Activated T-helper 1 cell treated with anti-CD3 and anti-CD28 coated beads, Interleukin-12 subunit alpha, Interleukin-12 subunit beta, Interleukin-2, Interleukin-4 antibody, amounts not matched to agents 30 ng/mL and 10 ng/mL and 1 ng/mL, durations not matched to agents 14 hours and 24 hours and 36 hours (primary cell): ENCODE measurements at regions of chr12 and their contacts with region 1.

Region 1: DNA sequence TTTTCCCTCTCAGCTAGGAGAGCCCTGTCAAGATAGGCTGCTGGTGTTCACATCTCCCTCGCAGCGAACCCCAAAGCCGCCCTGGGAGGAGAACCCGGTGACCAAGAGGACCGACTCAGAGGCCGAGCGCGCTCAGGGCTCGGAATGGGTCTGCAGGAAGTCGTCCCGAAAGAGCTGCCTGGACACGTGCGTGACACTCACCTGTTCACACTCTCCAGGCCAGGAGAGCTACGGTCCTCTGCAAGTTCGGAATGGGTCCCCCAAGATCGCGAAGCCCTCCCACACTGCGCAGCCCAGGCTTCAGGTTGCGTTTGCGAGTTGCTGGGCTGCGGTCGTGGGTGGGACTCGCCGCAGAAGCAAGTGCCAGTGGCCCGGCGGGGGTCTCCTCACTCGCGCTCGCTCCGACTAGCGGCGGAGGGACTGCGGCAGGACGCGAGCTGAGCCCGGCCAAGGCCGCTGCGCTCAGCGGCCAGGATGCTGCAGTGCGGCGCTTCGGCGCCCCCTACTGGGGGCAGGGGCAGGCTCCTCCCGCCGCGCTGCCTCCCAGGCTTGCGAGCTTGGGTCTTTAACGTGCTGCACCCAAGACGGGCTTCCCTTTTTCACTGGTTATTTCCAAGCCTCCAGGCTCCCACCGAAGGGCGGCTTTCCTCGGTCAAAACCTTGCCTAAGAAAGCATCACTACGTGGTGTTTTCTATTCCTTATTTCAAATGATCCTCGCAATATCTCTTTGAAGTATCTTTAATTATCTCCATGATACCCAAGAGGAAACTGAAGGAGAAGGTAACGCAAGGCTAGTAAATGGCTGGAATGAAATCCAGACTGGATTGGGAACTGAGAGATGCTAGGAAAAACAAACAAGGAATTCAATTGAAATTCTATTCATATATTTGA is at the start of gene RERG:
- DNase-seq: peak; percentile 65
- H3K4me3 Mint-ChIP-seq: peak within 1 kb of the TSS; percentile 43
- H3K27ac Mint-ChIP-seq: no peak within 1 kb of the TSS
- H3K4me1 Mint-ChIP-seq: no peaks in the 10 kb centered on the region
- H3K27me3 Mint-ChIP-seq: peaks cover 32% of the 10 kb centered on the region
- total RNA-seq, gene RERG: not detected in 2 replicates

Region 2: DNA sequence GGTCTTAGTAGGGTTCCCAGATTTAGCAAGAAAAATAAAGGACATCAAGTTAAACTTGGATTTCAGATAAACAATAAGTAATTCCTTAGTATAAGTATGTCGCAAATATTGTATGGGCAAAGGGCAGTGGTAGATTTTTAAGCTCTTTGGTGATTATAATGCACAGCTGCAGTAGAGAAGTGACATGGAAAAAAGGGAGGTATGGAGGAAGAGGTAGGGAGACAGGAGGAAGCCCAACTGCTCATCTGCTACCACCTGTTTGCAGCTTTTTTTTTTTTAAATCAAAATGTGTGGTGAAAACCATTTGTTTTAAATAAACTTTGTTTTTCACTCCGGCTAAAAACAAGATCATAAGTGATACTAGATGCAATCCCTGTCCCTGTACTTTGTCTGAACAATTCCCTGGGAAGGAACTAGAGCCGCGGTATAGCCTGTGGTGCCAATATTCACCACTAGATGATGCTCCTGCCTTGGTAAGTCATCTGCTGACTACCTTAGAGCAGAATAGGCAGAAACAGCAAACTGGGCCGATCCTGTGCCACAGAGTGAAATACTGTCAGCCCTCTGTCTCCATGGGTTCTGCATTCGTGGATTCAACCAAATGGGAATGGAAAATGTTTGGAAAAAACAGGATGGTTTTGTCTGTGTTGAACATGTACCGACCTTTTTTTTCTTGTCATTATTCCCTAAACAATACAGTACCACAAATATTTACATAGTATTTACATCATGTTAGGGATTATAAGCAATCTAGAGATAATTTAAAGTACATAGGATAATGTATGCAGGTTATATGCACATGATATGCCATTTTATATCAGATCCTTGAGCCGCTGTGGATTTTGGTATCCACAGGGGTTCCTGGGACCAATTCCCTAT is 591.2 kb before region 1 on chr12:
- intact Hi-C with region 1: loop called (anchors 5 kb)
- DNase-seq: peak; percentile 42
- H3K4me3 Mint-ChIP-seq: no peak overlapping the region
- H3K27ac Mint-ChIP-seq: no peak overlapping the region
- H3K4me1 Mint-ChIP-seq: no peaks in the 10 kb centered on the region
- H3K27me3 Mint-ChIP-seq: peaks cover 10% of the 10 kb centered on the region

Region 3: DNA sequence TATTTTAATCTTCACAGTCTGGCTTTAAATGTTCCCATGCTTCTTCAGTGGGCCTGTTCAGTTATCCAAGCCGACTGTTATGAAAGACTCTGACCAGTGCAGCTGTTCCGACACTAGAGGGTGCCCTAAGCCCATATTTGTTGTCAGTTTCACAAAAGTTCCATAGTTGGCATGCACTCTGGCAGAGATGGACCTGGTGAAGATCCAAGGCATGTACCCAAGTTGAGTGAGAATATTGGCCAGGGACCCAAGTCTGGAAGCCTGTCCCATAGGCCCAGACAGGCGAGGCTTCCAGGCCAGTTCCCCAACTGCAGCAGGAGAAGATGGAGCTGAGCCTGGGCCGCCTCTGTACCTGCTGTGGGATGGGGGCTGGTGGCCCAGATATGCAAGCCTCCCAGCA is 497.5 kb before region 1 on chr12:
- intact Hi-C with region 1: loop called (anchors 1 kb)
- DNase-seq: peak; percentile 31
- H3K4me3 Mint-ChIP-seq: no peak overlapping the region
- H3K27ac Mint-ChIP-seq: no peak overlapping the region
- H3K4me1 Mint-ChIP-seq: no peaks in the 10 kb centered on the region
- H3K27me3 Mint-ChIP-seq: peaks cover 15% of the 10 kb centered on the region

Region 4: DNA sequence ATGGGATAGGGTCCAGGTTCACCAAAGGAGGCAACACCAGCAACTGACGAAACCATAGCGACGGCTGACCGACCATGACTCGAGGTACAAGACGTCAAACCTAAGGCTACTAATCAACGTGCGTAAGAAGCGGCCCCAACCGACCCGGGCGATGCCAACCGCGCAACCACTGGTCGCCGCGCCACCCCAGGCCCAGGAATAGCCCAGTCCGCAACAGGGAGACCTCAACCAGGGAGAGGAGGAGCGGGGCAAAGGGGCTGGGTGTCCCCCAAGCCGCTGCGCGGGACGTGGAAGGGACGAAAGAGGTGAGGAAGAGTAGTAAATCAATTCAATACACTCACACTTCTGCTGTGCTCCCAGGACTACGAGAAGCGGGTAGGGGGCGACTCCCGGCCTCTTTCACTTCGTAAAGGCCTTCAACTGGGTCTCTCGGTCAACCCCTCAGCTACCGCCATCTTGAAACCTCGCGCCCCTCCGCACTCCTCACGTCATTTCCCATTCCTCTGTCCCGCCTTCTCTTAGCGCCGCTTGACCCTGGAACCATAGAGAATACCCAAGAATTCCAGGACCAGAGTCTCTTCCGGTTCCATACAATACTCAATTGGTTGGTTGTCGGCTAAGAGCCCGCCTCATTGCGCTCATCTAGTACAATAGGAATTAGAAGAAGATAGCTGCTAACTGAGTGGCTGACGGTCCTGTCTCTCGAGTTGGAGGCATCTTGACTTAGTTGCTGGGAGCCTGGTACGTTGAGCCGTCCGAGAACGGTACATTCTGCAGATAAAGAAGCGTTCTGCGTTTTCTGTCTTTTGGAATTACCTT is 418.0 kb before region 1 on chr12 and contains the starts of genes C12orf60 and WBP11:
- intact Hi-C with region 1: loop called (anchors 2 kb)
- DNase-seq: peak; percentile 84
- H3K4me3 Mint-ChIP-seq: no peak within 1 kb of the TSS
- H3K27ac Mint-ChIP-seq: no peak within 1 kb of the TSS
- H3K4me1 Mint-ChIP-seq: peaks cover 22% of the 10 kb centered on the region
- H3K27me3 Mint-ChIP-seq: no peaks in the 10 kb centered on the region
- total RNA-seq, gene C12orf60: 2.1 and 2.2 TPM in 2 replicates
- total RNA-seq, gene WBP11: 128 and 142 TPM in 2 replicates

Region 5: GRCh38 chr12:14845350-14845750 is 375.9 kb before region 1 on chr12:
- intact Hi-C with region 1: loop called (anchors 1 kb)
- DNase-seq: peak; percentile 6
- H3K4me3 Mint-ChIP-seq: no peak overlapping the region
- H3K27ac Mint-ChIP-seq: no peak overlapping the region
- H3K4me1 Mint-ChIP-seq: peaks cover 5% of the 10 kb centered on the region
- H3K27me3 Mint-ChIP-seq: peaks cover 5% of the 10 kb centered on the region

Region 6: GRCh38 chr12:15151161-15152120 is 69.8 kb before region 1 on chr12:
- intact Hi-C with region 1: loop called (anchors 1 kb)
- DNase-seq: no peak
- H3K4me3 Mint-ChIP-seq: no peak overlapping the region
- H3K27ac Mint-ChIP-seq: no peak overlapping the region
- H3K4me1 Mint-ChIP-seq: no peaks in the 10 kb centered on the region
- H3K27me3 Mint-ChIP-seq: peaks cover 2% of the 10 kb centered on the region

Region 7: DNA sequence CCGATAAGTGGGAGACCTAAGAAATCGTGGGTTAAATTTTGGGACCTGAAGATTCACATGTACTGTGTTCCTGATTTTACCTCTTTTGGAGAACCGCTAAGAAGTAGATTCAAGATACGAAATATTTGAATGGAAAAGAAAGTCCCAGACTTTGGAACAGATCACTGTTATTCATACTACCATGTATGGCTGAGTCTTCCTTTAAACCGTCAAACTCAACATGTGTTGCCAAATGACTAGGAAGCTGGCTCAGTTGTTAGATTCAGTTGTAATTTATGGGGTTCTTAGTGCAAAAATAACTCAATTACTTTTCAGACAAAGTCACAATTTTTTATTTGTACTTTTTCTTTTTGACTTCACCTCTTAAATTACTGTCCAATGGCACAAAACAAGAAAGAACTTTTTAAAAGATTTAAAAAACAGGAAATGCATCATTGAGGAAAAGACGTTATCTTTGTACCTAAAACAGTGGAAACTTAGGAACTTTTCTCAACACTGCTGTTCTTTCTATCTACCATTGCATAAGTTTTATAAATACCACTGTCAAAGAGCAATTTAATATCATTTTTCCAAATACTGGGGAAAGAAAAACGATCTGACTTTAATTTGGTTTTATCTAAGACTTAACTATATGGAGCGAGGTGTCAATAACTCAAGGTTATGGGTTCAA is 15.8 kb before region 1 on chr12:
- intact Hi-C with region 1: no loop called
- DNase-seq: no peak
- H3K4me3 Mint-ChIP-seq: no peak overlapping the region
- H3K27ac Mint-ChIP-seq: no peak overlapping the region
- H3K4me1 Mint-ChIP-seq: no peaks in the 10 kb centered on the region
- H3K27me3 Mint-ChIP-seq: peaks cover 5% of the 10 kb centered on the region